Activated CD4-positive, alpha-beta T cell treated with anti-CD3 and anti-CD28 coated beads for 36 hours (primary cell): ENCODE measurements at regions of chrX and their contacts with region 1.

Region 1: DNA sequence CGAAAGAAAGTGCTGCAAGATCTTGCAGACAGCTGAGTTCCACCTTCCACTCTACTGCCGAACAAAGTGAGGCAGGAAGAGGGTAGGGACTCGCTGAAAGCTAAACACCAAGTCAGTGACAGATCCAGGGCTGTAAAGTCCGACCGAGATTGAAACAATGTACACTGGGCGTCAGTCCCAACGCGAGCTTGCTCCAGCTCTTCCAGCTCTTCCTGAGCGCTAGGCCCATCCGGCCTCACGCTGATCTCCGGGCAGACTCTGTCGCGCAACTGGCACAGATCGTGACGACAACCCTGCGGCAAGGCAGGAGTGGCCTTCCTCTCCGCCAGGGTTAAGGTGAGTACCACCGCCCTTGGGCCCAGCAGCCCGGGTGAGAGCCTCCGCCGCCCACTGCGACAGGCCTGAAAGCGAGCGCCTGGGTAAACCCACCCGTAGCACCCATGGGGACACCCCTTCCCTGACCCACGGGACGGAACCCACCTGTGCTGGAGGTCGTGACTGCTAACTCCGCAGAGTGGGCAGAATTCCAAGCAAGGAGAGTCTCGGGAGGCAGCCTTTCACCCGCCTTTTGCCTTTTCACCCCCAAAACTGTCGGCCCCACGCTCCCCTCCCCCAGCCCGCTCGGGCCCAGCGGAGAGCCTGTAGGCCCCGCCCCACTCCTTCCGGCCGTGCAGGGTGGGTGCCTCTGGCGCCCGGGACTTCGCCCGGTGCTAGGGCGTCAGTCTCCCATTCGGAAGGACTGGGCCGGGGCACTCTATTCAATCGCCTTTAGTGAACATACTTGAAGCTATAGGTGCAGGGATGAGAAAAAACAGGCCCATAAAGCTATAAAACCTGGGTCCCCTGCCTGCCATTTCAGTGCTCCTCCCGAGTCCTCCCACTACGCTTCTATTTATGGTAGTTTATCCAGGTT is at the start of gene TMLHE:
- DNase-seq: peak; percentile 82
- ATAC-seq: peak; percentile 97
- H3K4me3 Mint-ChIP-seq: peak within 1 kb of the TSS; percentile 90
- H3K27ac Mint-ChIP-seq: peak within 1 kb of the TSS; percentile 94
- H3K4me1 Mint-ChIP-seq: peaks cover 23% of the 10 kb centered on the region
- H3K27me3 Mint-ChIP-seq: no peaks in the 10 kb centered on the region
- total RNA-seq, gene TMLHE: 13.3 to 16.5 TPM

Region 2: GRCh38 chrX:153684467-153685155 is 1928.0 kb before region 1 on chrX:
- CTCF ChIA-PET with region 1: no interaction called
- POLR2A ChIA-PET with region 1: no interaction called
- intact Hi-C with region 1: no loop called
- DNase-seq: no peak
- ATAC-seq: no peak
- H3K4me3 Mint-ChIP-seq: no peak overlapping the region
- H3K27ac Mint-ChIP-seq: no peak overlapping the region
- H3K4me1 Mint-ChIP-seq: no peaks in the 10 kb centered on the region
- H3K27me3 Mint-ChIP-seq: peaks cover 8% of the 10 kb centered on the region

Region 3: GRCh38 chrX:155417769-155418168 is 194.8 kb before region 1 on chrX:
- CTCF ChIA-PET with region 1: no interaction called
- POLR2A ChIA-PET with region 1: no interaction called
- intact Hi-C with region 1: no loop called
- DNase-seq: no peak
- ATAC-seq: peak; percentile 74
- H3K4me3 Mint-ChIP-seq: no peak overlapping the region
- H3K27ac Mint-ChIP-seq: no peak overlapping the region
- H3K4me1 Mint-ChIP-seq: no peaks in the 10 kb centered on the region
- H3K27me3 Mint-ChIP-seq: no peaks in the 10 kb centered on the region

Region 4: GRCh38 chrX:155632386-155633100 is 20.0 kb after region 1 on chrX:
- CTCF ChIA-PET with region 1: interaction called, 3 read pairs
- POLR2A ChIA-PET with region 1: no interaction called
- intact Hi-C with region 1: loop called in 1 of 2 experiments (anchors 1 kb)
- DNase-seq: peak; percentile 19
- ATAC-seq: peak; percentile 96
- H3K4me3 Mint-ChIP-seq: peak overlapping the region; percentile 49
- H3K27ac Mint-ChIP-seq: peak overlapping the region; percentile 79
- H3K4me1 Mint-ChIP-seq: peaks cover 9% of the 10 kb centered on the region
- H3K27me3 Mint-ChIP-seq: no peaks in the 10 kb centered on the region